Mammary epithelial cell (primary cell): ENCODE measurements at regions of chr16 and their contacts with region 1.

Region 1: GRCh38 chr16:87017365-87018012 is 299.7 kb downstream of the C16orf95 start:
- DNase-seq: peak; percentile 94
- H3K4me3 ChIP-seq: no peak overlapping the region
- H3K27ac ChIP-seq: no peak overlapping the region
- H3K4me1 ChIP-seq: peaks cover 9% of the 10 kb centered on the region
- H3K27me3 ChIP-seq: no peaks in the 10 kb centered on the region
- CTCF ChIP-seq: peak; percentile 36 to 45

Region 2: GRCh38 chr16:86809458-86809981 is 208.0 kb before region 1 on chr16:
- CTCF ChIA-PET with region 1: no interaction called
- dilution Hi-C with region 1: no loop called
- in situ Hi-C with region 1: loop called in 1 of 2 experiments (anchors 25 kb)
- intact Hi-C with region 1: loop called (anchors 1 kb)
- DNase-seq: peak; percentile 92
- H3K4me3 ChIP-seq: no peak overlapping the region
- H3K27ac ChIP-seq: no peak overlapping the region
- H3K4me1 ChIP-seq: peaks cover 25% of the 10 kb centered on the region
- H3K27me3 ChIP-seq: peaks cover 2% of the 10 kb centered on the region
- CTCF ChIP-seq: peak; percentile 23 to 49

Region 3: GRCh38 chr16:86874141-86874540 is 143.3 kb before region 1 on chr16:
- CTCF ChIA-PET with region 1: interaction called, 3 read pairs
- dilution Hi-C with region 1: no loop called
- in situ Hi-C with region 1: no loop called
- intact Hi-C with region 1: loop called (anchors 1 kb)
- DNase-seq: peak; percentile 20
- H3K4me3 ChIP-seq: no peak overlapping the region
- H3K27ac ChIP-seq: no peak overlapping the region
- H3K4me1 ChIP-seq: no peaks in the 10 kb centered on the region
- H3K27me3 ChIP-seq: no peaks in the 10 kb centered on the region
- CTCF ChIP-seq: peak; percentile 65 to 68

Region 4: GRCh38 chr16:87062569-87063442 is 45.3 kb after region 1 on chr16:
- CTCF ChIA-PET with region 1: no interaction called
- dilution Hi-C with region 1: no loop called
- in situ Hi-C with region 1: no loop called
- intact Hi-C with region 1: loop called (anchors 2 kb)
- DNase-seq: peak; percentile 28
- H3K4me3 ChIP-seq: peak overlapping the region in 1 of 3 experiments; percentile 29
- H3K27ac ChIP-seq: no peak overlapping the region
- H3K4me1 ChIP-seq: no peaks in the 10 kb centered on the region
- H3K27me3 ChIP-seq: no peaks in the 10 kb centered on the region
- CTCF ChIP-seq: peak; percentile 70 to 86

Region 5: GRCh38 chr16:87316923-87317749 is 299.6 kb after region 1 on chr16 and contains the start of gene C16orf95:
- CTCF ChIA-PET with region 1: no interaction called
- dilution Hi-C with region 1: no loop called
- in situ Hi-C with region 1: no loop called
- intact Hi-C with region 1: loop called (anchors 1 kb)
- DNase-seq: peak; percentile 92
- H3K4me3 ChIP-seq: peak within 1 kb of the TSS; percentile 91 to 92 (median 92)
- H3K27ac ChIP-seq: peak within 1 kb of the TSS; percentile 92
- H3K4me1 ChIP-seq: peaks cover 16% of the 10 kb centered on the region
- H3K27me3 ChIP-seq: no peaks in the 10 kb centered on the region
- CTCF ChIP-seq: peak; percentile 57 to 74
- total RNA-seq, gene C16orf95: 3.5 to 5.9 TPM